Vagina (tissue), 2 donors: ENCODE measurements at regions of chr1 and their contacts with region 1.

Region 1: DNA sequence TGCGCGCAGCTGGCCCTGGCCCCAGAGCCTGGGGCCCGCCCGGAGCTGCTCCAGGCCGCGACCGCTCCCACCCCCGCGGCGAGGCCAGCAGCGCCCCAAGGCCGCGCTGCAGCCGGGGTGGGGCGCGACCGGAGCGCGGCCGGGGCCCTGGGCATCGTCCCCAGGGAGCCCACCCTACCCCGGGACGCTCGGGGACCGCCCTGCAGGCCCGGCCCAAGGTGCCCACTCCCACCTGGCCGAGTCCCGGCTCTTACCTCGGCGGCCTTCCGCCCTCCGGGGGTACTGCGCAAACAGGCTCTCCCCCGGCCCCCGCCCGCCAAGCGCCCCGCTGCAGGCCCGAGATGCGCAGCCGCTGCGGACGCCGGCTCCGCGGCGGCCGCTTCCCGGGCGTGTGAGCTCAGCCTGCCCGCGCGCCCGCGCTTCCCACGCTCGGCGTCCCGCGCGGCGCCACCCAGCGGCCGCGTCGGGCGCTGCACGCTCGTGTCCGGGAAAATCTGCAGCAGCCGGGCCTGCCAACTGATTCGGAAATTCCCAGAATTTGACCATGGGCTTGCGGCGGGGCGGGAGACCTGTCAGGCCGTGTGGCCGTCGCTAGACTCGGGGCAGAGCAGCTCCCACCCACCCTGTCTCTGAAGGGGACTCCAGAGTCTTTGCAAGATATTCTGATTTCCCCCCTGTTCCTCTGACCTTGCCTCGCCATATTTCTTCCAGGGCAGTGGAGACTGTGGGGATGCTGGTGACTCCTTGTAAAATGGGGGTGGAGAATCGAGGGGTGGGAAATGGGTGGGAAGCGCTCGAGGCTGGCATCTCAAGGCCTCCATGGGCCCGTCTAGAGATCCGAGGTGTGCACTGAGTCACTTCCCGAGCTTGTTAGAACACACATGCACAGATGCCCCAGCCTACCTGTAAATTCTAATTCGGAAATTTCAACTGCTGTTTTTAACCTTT is 41.9 kb downstream of the CD34 start:
- DNase-seq: no peak
- H3K4me3 ChIP-seq: peak overlapping the region; percentile 88 to 97
- H3K27ac ChIP-seq: peak overlapping the region; percentile 98
- H3K4me1 ChIP-seq: peaks cover 74% of the 10 kb centered on the region
- H3K27me3 ChIP-seq: no peaks in the 10 kb centered on the region
- CTCF ChIP-seq: peak; percentile 50 to 65 (median 64)
- POLR2A ChIP-seq: peak in 1 of 2 donors; percentile 75

Region 2: GRCh38 chr1:207828485-207829158 is 40.4 kb before region 1 on chr1:
- intact Hi-C with region 1: loop called (anchors 2 kb)
- DNase-seq: no peak
- H3K4me3 ChIP-seq: no peak overlapping the region
- H3K27ac ChIP-seq: peak overlapping the region; percentile 94
- H3K4me1 ChIP-seq: peaks cover 86% of the 10 kb centered on the region
- H3K27me3 ChIP-seq: no peaks in the 10 kb centered on the region
- CTCF ChIP-seq: peak; percentile 70 to 92 (median 74)
- POLR2A ChIP-seq: no peak

Region 3: GRCh38 chr1:208423526-208423925 is 554.5 kb after region 1 on chr1:
- intact Hi-C with region 1: no loop called
- DNase-seq: no peak
- H3K4me3 ChIP-seq: no peak overlapping the region
- H3K27ac ChIP-seq: no peak overlapping the region
- H3K4me1 ChIP-seq: no peaks in the 10 kb centered on the region
- H3K27me3 ChIP-seq: no peaks in the 10 kb centered on the region
- CTCF ChIP-seq: no peak
- POLR2A ChIP-seq: no peak